Spleen (tissue), 13 donors: ENCODE measurements at regions of chr7 and their contacts with region 1.

Region 1: GRCh38 chr7:91089382-91089963 is 174.8 kb upstream of the FZD1 start:
- DNase-seq: no peak
- H3K4me3 ChIP-seq: peak overlapping the region in 1 of 8 donors; percentile 36
- H3K27ac ChIP-seq: no peak overlapping the region
- H3K4me1 ChIP-seq: peaks cover 0 to 11% (median 0%) of the 10 kb centered on the region in 6 donors
- H3K27me3 ChIP-seq: no peaks in the 10 kb centered on the region
- CTCF ChIP-seq: peak in 9 of 11 experiments; percentile 35 to 72 (median 66)
- POLR2A ChIP-seq: no peak

Region 2: GRCh38 chr7:91636129-91636724 is 546.8 kb after region 1 on chr7:
- intact Hi-C with region 1: loop called (anchors 5 kb)
- DNase-seq: no peak
- H3K4me3 ChIP-seq: no peak overlapping the region
- H3K27ac ChIP-seq: no peak overlapping the region
- H3K4me1 ChIP-seq: no peaks in the 10 kb centered on the region
- H3K27me3 ChIP-seq: no peaks in the 10 kb centered on the region
- CTCF ChIP-seq: peak in 9 of 11 experiments; percentile 9 to 63 (median 46)
- POLR2A ChIP-seq: no peak